ENCODE measurements at regions of chr16 and their contacts with region 1.

Region 1: DNA sequence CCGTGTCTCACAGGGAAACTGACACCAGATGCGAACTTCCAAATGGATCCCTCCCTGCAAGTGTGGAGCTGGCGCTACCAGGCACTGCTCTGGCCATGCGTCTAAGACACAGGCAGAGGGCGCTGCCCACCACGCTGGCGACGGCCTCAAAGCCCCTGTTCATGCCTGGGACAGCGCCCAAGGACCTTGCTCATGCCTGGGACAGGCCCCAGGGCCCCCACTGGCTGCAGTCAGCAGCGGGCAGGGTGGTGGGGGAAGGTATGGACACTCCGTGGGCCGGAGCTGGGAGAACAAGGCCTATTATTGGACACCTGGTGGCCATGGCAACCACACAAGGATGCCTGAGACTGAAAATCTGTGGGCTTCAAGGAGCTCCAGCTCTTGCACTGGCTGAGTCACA is 8.8 kb downstream of the ZG16B start:
- DNase-seq: peak; percentile 23
- H3K4me3 ChIP-seq: no peak overlapping the region
- CTCF ChIP-seq: peak; percentile 96

Region 2: GRCh38 chr16:2860826-2861567 is 22.1 kb after region 1 on chr16:
- CTCF ChIA-PET with region 1: interaction called, 134 read pairs
- POLR2A ChIA-PET with region 1: no interaction called
- DNase-seq: no peak
- H3K4me3 ChIP-seq: no peak overlapping the region
- CTCF ChIP-seq: no peak

Region 3: DNA sequence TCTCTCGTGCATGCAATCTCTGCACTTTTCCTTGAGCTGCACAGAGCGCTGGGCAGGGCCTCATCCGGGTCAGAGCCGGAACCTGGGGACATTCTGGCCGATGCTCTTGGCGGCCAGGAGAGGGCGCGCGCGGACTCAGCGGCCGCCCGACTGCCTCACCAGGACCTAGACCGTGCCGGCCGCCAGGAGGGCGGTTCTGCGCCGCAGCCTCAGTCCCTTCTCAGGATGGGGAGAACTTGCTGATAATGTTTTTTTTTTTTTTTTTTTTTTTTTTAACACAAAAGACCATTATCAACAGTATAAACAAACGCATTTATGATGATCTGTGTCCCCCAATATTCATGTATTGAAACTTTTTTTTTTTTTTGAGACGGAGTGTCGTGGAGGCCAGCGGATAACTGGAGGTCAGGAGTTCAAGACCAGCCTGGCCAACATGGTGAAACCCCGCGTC is 36.0 kb after region 1 on chr16:
- CTCF ChIA-PET with region 1: interaction called, 48 read pairs
- POLR2A ChIA-PET with region 1: no interaction called
- DNase-seq: no peak
- H3K4me3 ChIP-seq: no peak overlapping the region
- CTCF ChIP-seq: peak; percentile 100

Region 4: GRCh38 chr16:2919511-2920255 is 80.8 kb after region 1 on chr16:
- CTCF ChIA-PET with region 1: interaction called, 71 read pairs
- POLR2A ChIA-PET with region 1: no interaction called
- DNase-seq: no peak
- H3K4me3 ChIP-seq: no peak overlapping the region
- CTCF ChIP-seq: peak; percentile 74